ENCODE measurements at regions of chr3 and their contacts with region 1.

Region 1: GRCh38 chr3:65186268-65186667 is 498.5 kb upstream of the ADAMTS9 start:
- DNase-seq: no peak
- ATAC-seq: no peak
- H3K4me3 ChIP-seq: no peak overlapping the region
- H3K4me3 Mint-ChIP-seq: no peak overlapping the region
- H3K27ac ChIP-seq: no peak overlapping the region
- H3K27ac Mint-ChIP-seq: no peak overlapping the region
- H3K4me1 ChIP-seq: no peaks in the 10 kb centered on the region
- H3K4me1 Mint-ChIP-seq: no peaks in the 10 kb centered on the region
- H3K27me3 ChIP-seq: no peaks in the 10 kb centered on the region
- H3K27me3 Mint-ChIP-seq: no peaks in the 10 kb centered on the region
- CTCF ChIP-seq: no peak

Region 2: DNA sequence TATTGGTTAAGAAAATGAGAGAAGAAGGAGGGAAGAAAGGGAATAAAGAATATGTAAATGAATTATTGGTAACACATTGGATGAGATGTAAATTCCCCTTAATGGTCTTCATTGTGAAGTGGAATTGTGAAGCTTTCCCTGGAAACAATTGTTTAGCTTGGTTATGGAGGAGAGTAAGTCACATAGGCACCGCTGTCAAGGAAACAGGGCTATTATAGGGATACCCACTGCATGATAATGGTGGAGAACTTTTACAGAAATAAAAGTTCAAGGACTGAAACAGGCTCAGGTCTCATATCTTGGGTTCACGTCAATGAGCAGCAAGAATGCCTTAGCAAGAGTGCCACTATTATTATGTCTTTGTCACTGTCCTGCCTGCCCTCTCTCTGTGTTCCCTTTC is 1898.6 kb before region 1 on chr3:
- CTCF ChIA-PET with region 1: no interaction called
- POLR2A ChIA-PET with region 1: no interaction called
- intact Hi-C with region 1: loop called in 1 of 2 experiments (anchors 5 kb)
- DNase-seq: no peak
- ATAC-seq: no peak
- H3K4me3 ChIP-seq: no peak overlapping the region
- H3K4me3 Mint-ChIP-seq: no peak overlapping the region
- H3K27ac ChIP-seq: no peak overlapping the region
- H3K27ac Mint-ChIP-seq: no peak overlapping the region
- H3K4me1 ChIP-seq: no peaks in the 10 kb centered on the region
- H3K4me1 Mint-ChIP-seq: no peaks in the 10 kb centered on the region
- H3K27me3 ChIP-seq: no peaks in the 10 kb centered on the region
- H3K27me3 Mint-ChIP-seq: no peaks in the 10 kb centered on the region
- CTCF ChIP-seq: no peak

Measured in CD8-positive, alpha-beta T cell (primary cell).